ENCODE measurements at regions of chr15 and their contacts with region 1.

Region 1: GRCh38 chr15:34987985-34988873 is at the start of gene ZNF770:
- DNase-seq: peak; percentile 80 to 89
- H3K4me3 ChIP-seq: peak within 1 kb of the TSS; percentile 90
- H3K4me3 Mint-ChIP-seq: peak within 1 kb of the TSS; percentile 95
- H3K27ac Mint-ChIP-seq: peak within 1 kb of the TSS; percentile 98
- H3K4me1 ChIP-seq: peaks cover 4% of the 10 kb centered on the region; the same call in 1 of the 2 replicates
- H3K4me1 Mint-ChIP-seq: peaks cover 6% of the 10 kb centered on the region
- H3K27me3 ChIP-seq: no peaks in the 10 kb centered on the region
- H3K27me3 Mint-ChIP-seq: no peaks in the 10 kb centered on the region
- CTCF ChIP-seq: no peak
- total RNA-seq, gene ZNF770: 31.4 and 33.0 TPM in 2 replicates

Region 2: DNA sequence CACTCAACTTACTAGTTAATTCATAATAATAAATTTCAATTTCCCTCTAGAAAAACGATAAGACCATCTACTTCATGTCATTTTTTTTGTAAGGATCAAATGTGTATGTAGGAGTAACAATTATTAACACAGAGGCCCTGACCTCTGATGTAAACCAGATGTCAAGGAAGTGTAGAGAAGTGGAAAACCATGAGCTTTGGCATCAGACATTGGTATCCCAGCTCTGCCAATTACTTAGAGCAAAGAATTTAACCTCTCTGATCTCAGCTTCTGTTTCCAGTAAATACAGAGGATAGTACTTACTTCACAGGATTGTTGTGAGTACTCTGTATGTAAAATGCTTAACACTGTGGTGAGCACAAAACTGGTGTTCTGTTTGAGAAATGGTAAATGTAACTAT is 36.2 kb before region 1 on chr15:
- CTCF ChIA-PET with region 1: no interaction called
- POLR2A ChIA-PET with region 1: no interaction called
- intact Hi-C with region 1: no loop called
- DNase-seq: no peak
- H3K4me3 ChIP-seq: no peak overlapping the region
- H3K4me3 Mint-ChIP-seq: no peak overlapping the region
- H3K27ac Mint-ChIP-seq: no peak overlapping the region
- H3K4me1 ChIP-seq: peaks cover 12% of the 10 kb centered on the region
- H3K4me1 Mint-ChIP-seq: no peaks in the 10 kb centered on the region
- H3K27me3 ChIP-seq: no peaks in the 10 kb centered on the region
- H3K27me3 Mint-ChIP-seq: no peaks in the 10 kb centered on the region
- CTCF ChIP-seq: no peak

Region 3: GRCh38 chr15:34969340-34970097 is 18.7 kb before region 1 on chr15 and contains the start of gene AQR:
- CTCF ChIA-PET with region 1: interaction called, 30 read pairs
- POLR2A ChIA-PET with region 1: interaction called, 26 read pairs
- intact Hi-C with region 1: loop called (anchors 1 kb)
- DNase-seq: peak; percentile 94 to 96
- H3K4me3 ChIP-seq: peak within 1 kb of the TSS; percentile 93
- H3K4me3 Mint-ChIP-seq: peak within 1 kb of the TSS; percentile 98
- H3K27ac Mint-ChIP-seq: peak within 1 kb of the TSS; percentile 99
- H3K4me1 ChIP-seq: 0 out of 2 replicates have a peak, but pooled peaks cover 3% of the 10 kb centered on the region
- H3K4me1 Mint-ChIP-seq: peaks cover 25% of the 10 kb centered on the region
- H3K27me3 ChIP-seq: no peaks in the 10 kb centered on the region
- H3K27me3 Mint-ChIP-seq: no peaks in the 10 kb centered on the region
- CTCF ChIP-seq: peak; percentile 84 to 92
- total RNA-seq, gene AQR: 27.7 and 34.9 TPM in 2 replicates

Measured in Caco-2 (cell line).